Vagina (tissue), 2 donors: ENCODE measurements at regions of chr11 and their contacts with region 1.

Region 1: GRCh38 chr11:84947967-84948580 is 679.1 kb downstream of the DLG2 start:
- DNase-seq: no peak
- H3K4me3 ChIP-seq: no peak overlapping the region
- H3K27ac ChIP-seq: no peak overlapping the region
- H3K4me1 ChIP-seq: no peaks in the 10 kb centered on the region
- H3K27me3 ChIP-seq: no peaks in the 10 kb centered on the region
- CTCF ChIP-seq: no peak
- POLR2A ChIP-seq: no peak

Region 2: GRCh38 chr11:84780689-84781293 is 167.3 kb before region 1 on chr11:
- intact Hi-C with region 1: no loop called
- DNase-seq: no peak
- H3K4me3 ChIP-seq: no peak overlapping the region
- H3K27ac ChIP-seq: no peak overlapping the region
- H3K4me1 ChIP-seq: no peaks in the 10 kb centered on the region
- H3K27me3 ChIP-seq: no peaks in the 10 kb centered on the region
- CTCF ChIP-seq: no peak
- POLR2A ChIP-seq: no peak

Region 3: GRCh38 chr11:84930863-84931262 is 17.2 kb before region 1 on chr11:
- intact Hi-C with region 1: loop called (anchors 1 kb)
- DNase-seq: no peak
- H3K4me3 ChIP-seq: no peak overlapping the region
- H3K27ac ChIP-seq: no peak overlapping the region
- H3K4me1 ChIP-seq: no peaks in the 10 kb centered on the region
- H3K27me3 ChIP-seq: no peaks in the 10 kb centered on the region
- CTCF ChIP-seq: no peak
- POLR2A ChIP-seq: no peak